Endothelial cell of umbilical vein (primary cell): ENCODE measurements at regions of chr17 and their contacts with region 1.

Region 1: DNA sequence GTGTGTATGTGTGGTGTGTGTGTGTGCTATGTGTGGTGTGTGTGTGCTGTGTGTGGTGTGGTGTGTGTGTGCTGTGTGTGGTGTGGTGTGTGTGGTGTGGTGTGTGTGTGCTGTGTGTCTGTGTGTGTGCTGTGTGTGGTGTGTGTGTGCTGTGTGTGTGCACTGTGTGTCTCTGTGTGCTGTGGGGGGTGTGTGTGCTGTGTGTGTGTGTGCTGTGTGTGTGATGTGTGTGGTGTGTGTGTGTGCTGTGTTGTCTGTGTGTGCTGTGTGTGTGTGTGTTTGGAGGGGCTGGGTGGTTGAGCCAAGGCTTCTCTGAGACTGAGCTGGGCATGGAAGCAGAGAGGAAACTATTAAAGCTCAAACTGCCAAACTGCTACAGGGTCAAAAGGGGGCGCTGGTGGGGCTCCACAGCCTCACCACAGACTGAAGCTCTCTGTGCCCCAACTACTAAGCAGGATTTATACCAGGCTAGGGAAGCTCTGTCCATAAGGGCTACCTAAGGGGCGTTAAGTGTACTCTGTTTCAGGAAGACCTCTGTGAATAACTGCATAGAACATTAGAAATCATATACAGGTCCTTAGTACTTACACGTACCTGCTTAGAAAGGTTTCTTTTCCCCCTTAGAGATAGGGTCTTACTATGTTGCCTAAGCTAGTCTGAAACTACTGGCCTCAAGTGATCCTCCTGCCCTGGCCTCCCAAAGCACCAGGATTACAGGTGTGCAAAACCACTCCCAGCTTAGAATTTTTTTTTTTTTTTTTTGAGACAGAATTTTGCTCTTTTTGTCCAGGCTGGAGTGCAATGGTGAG is 27.8 kb upstream of the GHDC start:
- DNase-seq: peak; percentile 77
- H3K4me3 ChIP-seq: no peak overlapping the region
- H3K27ac ChIP-seq: no peak overlapping the region
- H3K4me1 ChIP-seq: peaks cover 1% of the 10 kb centered on the region
- H3K27me3 ChIP-seq: no peaks in the 10 kb centered on the region
- CTCF ChIP-seq: peak; percentile 78 to 86
- POLR2A ChIP-seq: no peak

Region 2: DNA sequence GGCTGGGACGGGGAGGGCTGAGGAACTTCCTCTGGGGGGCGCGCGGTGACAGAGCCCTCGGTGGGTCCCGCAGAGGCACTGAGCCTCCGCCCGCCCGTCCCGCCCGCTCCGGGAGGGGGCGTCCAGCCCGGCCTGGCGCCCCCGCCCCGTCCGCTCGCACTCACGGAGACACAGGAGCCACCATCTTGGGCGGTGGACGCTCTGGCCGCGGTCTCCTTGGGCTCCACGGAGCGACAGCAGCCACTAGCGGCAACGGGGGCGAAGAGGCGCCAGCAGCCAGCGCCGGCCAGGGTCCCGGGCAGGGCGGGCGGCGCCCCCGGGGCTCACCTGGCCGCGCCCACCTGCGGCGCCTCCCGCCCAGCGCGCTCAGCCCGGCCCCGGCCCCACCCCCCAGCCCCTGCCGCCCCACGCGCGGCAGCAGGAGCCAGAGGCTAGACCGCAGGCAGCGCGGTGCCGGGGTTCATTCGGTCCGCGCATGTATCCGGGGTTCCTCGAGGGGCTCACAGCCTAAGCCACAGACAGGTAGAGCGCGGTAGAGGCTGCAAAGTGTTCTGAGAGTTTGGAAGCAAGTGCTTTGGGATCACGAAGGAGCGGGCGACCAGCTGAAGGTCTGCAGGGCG is 171.6 kb before region 1 on chr17 and contains the start of gene C17orf113:
- CTCF ChIA-PET with region 1: no interaction called
- POLR2A ChIA-PET with region 1: no interaction called
- dilution Hi-C with region 1: no loop called
- intact Hi-C with region 1: no loop called
- DNase-seq: peak; percentile 36
- H3K4me3 ChIP-seq: peak within 1 kb of the TSS in 2 of 3 experiments; percentile 39 to 49
- H3K27ac ChIP-seq: no peak within 1 kb of the TSS
- H3K4me1 ChIP-seq: no peaks in the 10 kb centered on the region
- H3K27me3 ChIP-seq: peaks cover 25 to 38% of the 10 kb centered on the region in 2 experiments
- CTCF ChIP-seq: peak; percentile 8 to 48
- POLR2A ChIP-seq: no peak
- total RNA-seq, gene C17orf113: 0.18 and 0.20 TPM in 2 replicates

Region 3: GRCh38 chr17:42067351-42068091 is 154.6 kb before region 1 on chr17:
- CTCF ChIA-PET with region 1: no interaction called
- POLR2A ChIA-PET with region 1: no interaction called
- dilution Hi-C with region 1: no loop called
- intact Hi-C with region 1: no loop called
- DNase-seq: peak; percentile 57
- H3K4me3 ChIP-seq: no peak overlapping the region
- H3K27ac ChIP-seq: no peak overlapping the region
- H3K4me1 ChIP-seq: peaks cover 3% of the 10 kb centered on the region
- H3K27me3 ChIP-seq: peaks cover 0 to 9% of the 10 kb centered on the region in 2 experiments
- CTCF ChIP-seq: peak; percentile 76 to 89
- POLR2A ChIP-seq: no peak

Region 4: DNA sequence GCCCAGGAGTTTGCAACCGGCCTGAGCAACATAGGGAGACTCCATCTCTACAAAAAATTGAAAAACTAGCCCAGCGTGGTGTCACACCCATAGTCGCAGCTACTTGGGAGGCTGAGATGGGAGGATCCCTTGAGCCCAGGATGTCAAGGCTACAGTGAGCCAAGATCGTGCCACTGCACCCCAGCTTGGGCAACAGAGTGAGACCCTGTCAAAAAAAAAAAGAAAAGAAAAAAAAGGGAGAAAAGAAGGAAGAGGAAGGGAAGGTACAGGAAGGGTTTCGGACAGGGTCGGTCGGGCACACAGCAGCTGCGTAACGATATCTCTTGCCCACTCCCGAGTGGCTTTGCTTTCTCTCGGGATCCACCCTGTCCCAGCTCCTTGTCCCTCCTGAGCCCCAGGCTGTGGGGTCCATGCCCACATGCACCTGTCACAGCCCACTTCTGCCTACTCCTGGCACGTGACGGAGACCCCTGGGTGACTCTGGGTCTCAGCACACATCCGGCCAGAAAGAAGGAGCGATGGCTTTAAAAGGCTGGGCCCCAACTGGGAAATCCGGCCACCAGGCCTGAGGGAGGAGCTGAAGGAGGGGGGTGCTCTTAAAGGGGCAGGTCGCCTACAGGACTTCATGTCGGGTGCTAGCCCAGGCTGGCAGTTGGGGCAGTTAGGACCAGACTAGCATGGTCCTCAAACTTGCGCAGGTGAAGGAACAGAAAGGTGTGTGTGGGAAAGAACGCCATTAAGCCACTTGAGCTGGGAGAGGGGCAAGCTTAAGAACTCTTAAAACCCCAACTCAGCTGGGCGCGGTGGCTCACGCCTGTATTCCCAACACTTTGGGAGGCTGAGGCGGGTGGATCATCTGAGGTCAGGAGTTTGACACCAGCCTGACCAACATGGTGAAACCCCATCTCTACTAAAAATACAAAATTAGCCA is 27.9 kb before region 1 on chr17 and contains the start of gene GHDC:
- CTCF ChIA-PET with region 1: interaction called, 24 read pairs
- POLR2A ChIA-PET with region 1: no interaction called
- dilution Hi-C with region 1: no loop called
- intact Hi-C with region 1: no loop called
- DNase-seq: peak; percentile 77
- H3K4me3 ChIP-seq: peak within 1 kb of the TSS; percentile 22 to 52 (median 46)
- H3K27ac ChIP-seq: no peak within 1 kb of the TSS
- H3K4me1 ChIP-seq: no peaks in the 10 kb centered on the region
- H3K27me3 ChIP-seq: no peaks in the 10 kb centered on the region
- CTCF ChIP-seq: no peak
- POLR2A ChIP-seq: peak; percentile 57
- total RNA-seq, gene GHDC: 9.8 TPM in 2 replicates

Region 5: DNA sequence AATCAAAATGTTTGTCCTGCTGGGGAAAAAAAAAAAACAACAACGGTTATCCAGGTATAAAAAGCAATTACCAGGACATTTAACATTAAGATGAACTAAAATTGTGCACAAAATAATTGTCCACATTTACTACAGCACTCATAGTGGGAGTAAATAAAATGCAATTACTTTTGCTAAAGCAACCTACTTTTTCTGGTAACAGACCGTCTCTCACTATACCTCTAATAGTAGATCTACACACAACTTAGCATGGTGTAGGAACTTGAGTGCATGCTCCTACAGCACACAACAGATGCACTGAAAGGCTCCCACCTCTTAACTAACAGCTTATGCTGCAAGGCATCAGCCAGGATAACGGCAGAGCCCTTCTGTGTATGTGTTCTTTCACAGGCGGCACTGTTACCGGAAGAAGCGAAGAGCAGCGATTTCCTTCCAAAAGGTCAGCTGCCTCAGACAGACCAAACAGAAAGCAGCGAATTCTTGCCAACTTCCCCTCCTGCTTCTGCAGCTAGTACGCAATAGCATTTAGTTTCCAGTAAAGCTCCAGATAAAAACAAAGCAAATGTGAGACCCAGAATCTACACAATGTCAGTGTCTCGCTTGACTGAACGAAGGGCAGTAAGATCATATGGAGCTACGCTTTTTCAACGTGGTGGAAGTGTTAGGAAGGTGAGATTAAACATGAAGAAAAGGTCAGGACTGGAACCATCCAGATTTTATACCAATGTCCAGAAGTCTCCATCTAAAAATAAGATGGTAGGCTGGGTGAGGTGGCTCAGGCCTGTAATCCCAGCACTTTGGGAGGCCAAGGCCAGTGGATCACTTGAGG is 26.4 kb after region 1 on chr17:
- CTCF ChIA-PET with region 1: interaction called, 107 read pairs
- POLR2A ChIA-PET with region 1: no interaction called
- dilution Hi-C with region 1: no loop called
- intact Hi-C with region 1: no loop called
- DNase-seq: peak; percentile 95
- H3K4me3 ChIP-seq: peak overlapping the region in 1 of 3 experiments; percentile 19
- H3K27ac ChIP-seq: peak overlapping the region; percentile 63
- H3K4me1 ChIP-seq: peaks cover 40% of the 10 kb centered on the region
- H3K27me3 ChIP-seq: no peaks in the 10 kb centered on the region
- CTCF ChIP-seq: no peak
- POLR2A ChIP-seq: peak; percentile 11

Region 6: DNA sequence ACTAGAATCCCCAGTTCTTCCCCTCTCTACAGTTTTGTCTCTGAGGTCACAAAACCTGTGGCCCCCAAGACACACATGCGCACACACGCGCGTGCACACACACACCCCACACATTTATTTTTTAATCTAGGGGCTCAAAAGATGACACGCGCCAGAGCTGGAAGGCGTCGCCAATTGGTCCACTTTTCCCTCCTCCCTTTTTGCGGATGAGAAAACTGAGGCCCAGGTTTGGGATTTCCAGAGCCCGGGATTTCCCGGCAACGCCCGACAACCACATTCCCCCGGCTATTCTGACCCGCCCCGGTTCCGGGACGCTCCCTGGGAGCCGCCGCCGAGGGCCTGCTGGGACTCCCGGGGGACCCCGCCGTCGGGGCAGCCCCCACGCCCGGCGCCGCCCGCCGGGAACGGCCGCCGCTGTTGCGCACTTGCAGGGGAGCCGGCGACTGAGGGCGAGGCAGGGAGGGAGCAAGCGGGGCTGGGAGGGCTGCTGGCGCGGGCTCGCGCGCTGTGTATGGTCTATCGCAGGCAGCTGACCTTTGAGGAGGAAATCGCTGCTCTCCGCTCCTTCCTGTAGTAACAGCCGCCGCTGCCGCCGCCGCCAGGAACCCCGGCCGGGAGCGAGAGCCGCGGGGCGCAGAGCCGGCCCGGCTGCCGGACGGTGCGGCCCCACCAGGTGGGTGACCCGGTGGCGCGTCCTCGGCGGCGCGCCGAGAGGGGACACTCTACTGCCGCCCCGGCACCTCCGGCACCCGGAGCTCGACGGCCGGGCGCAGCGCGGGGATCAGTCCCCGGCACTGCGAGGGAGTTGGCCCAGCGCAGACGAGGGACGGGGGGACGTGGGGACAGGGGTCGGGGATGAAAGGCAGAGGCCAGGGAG is 66.0 kb after region 1 on chr17 and contains the start of gene STAT5A:
- CTCF ChIA-PET with region 1: interaction called, 89 read pairs
- POLR2A ChIA-PET with region 1: no interaction called
- dilution Hi-C with region 1: no loop called
- intact Hi-C with region 1: loop called (anchors 2 kb)
- DNase-seq: peak; percentile 88
- H3K4me3 ChIP-seq: peak within 1 kb of the TSS; percentile 23 to 59 (median 30)
- H3K27ac ChIP-seq: peak within 1 kb of the TSS; percentile 42
- H3K4me1 ChIP-seq: peaks cover 14% of the 10 kb centered on the region
- H3K27me3 ChIP-seq: no peaks in the 10 kb centered on the region
- CTCF ChIP-seq: no peak
- POLR2A ChIP-seq: peak; percentile 59
- total RNA-seq, gene STAT5A: 23.4 and 23.6 TPM in 2 replicates

Region 7: GRCh38 chr17:42329025-42329976 is 107.2 kb after region 1 on chr17:
- CTCF ChIA-PET with region 1: interaction called, 11 read pairs
- POLR2A ChIA-PET with region 1: no interaction called
- dilution Hi-C with region 1: no loop called
- intact Hi-C with region 1: no loop called
- DNase-seq: peak; percentile 69
- H3K4me3 ChIP-seq: no peak overlapping the region
- H3K27ac ChIP-seq: peak overlapping the region; percentile 35
- H3K4me1 ChIP-seq: peaks cover 14% of the 10 kb centered on the region
- H3K27me3 ChIP-seq: no peaks in the 10 kb centered on the region
- CTCF ChIP-seq: no peak
- POLR2A ChIP-seq: no peak

Region 8: DNA sequence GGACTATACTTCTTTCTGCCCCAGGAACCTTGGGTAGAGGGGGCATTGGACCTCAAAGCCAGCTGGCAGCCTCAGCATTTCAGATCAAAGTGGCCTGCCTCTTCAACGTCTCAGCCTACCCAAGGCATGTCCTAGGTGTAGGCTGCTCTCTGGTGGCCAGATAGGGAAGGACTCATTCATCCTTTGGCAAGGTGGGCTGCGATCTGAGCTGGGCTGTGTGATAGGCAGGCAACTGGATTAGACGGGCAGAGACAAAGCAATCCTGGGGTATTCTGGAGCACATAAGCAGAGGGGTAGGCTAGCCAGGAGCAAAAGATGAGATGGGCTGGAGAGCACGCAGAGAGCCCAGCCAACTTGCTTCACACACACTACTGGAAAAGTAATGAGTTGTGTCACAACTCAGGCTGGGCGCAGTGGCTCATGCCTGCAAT is 305.1 kb after region 1 on chr17:
- CTCF ChIA-PET with region 1: interaction called, 52 read pairs
- POLR2A ChIA-PET with region 1: interaction called, 3 read pairs
- dilution Hi-C with region 1: no loop called
- intact Hi-C with region 1: loop called (anchors 1 kb)
- DNase-seq: peak; percentile 90
- H3K4me3 ChIP-seq: no peak overlapping the region
- H3K27ac ChIP-seq: peak overlapping the region; percentile 32
- H3K4me1 ChIP-seq: peaks cover 19% of the 10 kb centered on the region
- H3K27me3 ChIP-seq: no peaks in the 10 kb centered on the region
- CTCF ChIP-seq: peak; percentile 85 to 86
- POLR2A ChIP-seq: no peak